ENCODE measurements at regions of chr17 and their contacts with region 1.

Region 1: GRCh38 chr17:40967581-40967980 is 833 bp upstream of the KRT39 start:
- DNase-seq: no peak
- ATAC-seq: no peak

Region 2: GRCh38 chr17:40903129-40904065 is 64.2 kb before region 1 on chr17:
- intact Hi-C with region 1: no loop called
- DNase-seq: no peak
- ATAC-seq: no peak

Region 3: GRCh38 chr17:41029633-41030245 is 62.2 kb after region 1 on chr17 and contains the start of gene KRTAP1-4:
- intact Hi-C with region 1: loop called (anchors 2 kb)
- DNase-seq: no peak
- ATAC-seq: no peak
- total RNA-seq, gene KRTAP1-4: not detected

Region 4: GRCh38 chr17:41254861-41255260 is 287.3 kb after region 1 on chr17:
- intact Hi-C with region 1: no loop called
- DNase-seq: no peak
- ATAC-seq: no peak

Measured in left ventricle myocardium superior (tissue), 1 donor.